ENCODE measurements at regions of chr10 and their contacts with region 1.

Region 1: GRCh38 chr10:103859161-103860086 is 4.0 kb upstream of the SH3PXD2A start:
- DNase-seq: peak; percentile 77
- H3K4me3 Mint-ChIP-seq: no peak overlapping the region
- H3K27ac Mint-ChIP-seq: no peak overlapping the region
- H3K4me1 Mint-ChIP-seq: peaks cover 18% of the 10 kb centered on the region
- H3K27me3 Mint-ChIP-seq: no peaks in the 10 kb centered on the region
- CTCF ChIP-seq: peak; percentile 71

Region 2: GRCh38 chr10:103712570-103713498 is 146.6 kb before region 1 on chr10:
- CTCF ChIA-PET with region 1: interaction called, 95 read pairs
- POLR2A ChIA-PET with region 1: interaction called, 7 read pairs
- intact Hi-C with region 1: loop called (anchors 1 kb)
- DNase-seq: peak; percentile 79
- H3K4me3 Mint-ChIP-seq: no peak overlapping the region
- H3K27ac Mint-ChIP-seq: peak overlapping the region; percentile 31
- H3K4me1 Mint-ChIP-seq: peaks cover 29% of the 10 kb centered on the region
- H3K27me3 Mint-ChIP-seq: no peaks in the 10 kb centered on the region
- CTCF ChIP-seq: peak; percentile 93

Region 3: GRCh38 chr10:103781329-103782061 is 77.9 kb before region 1 on chr10:
- CTCF ChIA-PET with region 1: interaction called, 9 read pairs
- POLR2A ChIA-PET with region 1: interaction called, 6 read pairs
- intact Hi-C with region 1: loop called (anchors 10 kb)
- DNase-seq: peak; percentile 66
- H3K4me3 Mint-ChIP-seq: peak overlapping the region; percentile 23
- H3K27ac Mint-ChIP-seq: peak overlapping the region; percentile 74
- H3K4me1 Mint-ChIP-seq: peaks cover 47% of the 10 kb centered on the region
- H3K27me3 Mint-ChIP-seq: no peaks in the 10 kb centered on the region
- CTCF ChIP-seq: peak; percentile 12

Region 4: DNA sequence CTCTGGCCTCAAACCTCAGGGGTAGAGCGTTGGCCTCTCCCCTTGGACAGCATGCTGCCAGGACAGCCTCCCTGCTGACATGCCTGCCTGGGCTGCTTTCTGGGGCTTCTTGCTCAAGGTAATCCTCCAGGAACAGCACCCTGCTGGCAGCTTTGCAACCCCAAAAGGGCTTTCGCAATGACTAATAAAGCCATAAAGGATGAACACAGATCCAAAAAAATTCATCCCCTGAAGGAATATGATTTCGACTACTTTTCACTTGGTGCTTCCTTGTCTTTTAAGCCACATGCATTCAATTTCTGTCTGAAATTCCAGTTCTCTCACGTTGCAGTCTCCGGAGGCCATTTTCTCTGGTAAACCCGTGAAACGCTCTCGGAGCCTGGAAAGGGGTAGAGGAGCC is 11.1 kb after region 1 on chr10:
- CTCF ChIA-PET with region 1: interaction called, 5 read pairs
- POLR2A ChIA-PET with region 1: interaction called, 85 read pairs
- intact Hi-C with region 1: no loop called
- DNase-seq: peak; percentile 97
- H3K4me3 Mint-ChIP-seq: peak overlapping the region; percentile 70
- H3K27ac Mint-ChIP-seq: peak overlapping the region; percentile 97
- H3K4me1 Mint-ChIP-seq: peaks cover 29% of the 10 kb centered on the region
- H3K27me3 Mint-ChIP-seq: no peaks in the 10 kb centered on the region
- CTCF ChIP-seq: no peak

Region 5: DNA sequence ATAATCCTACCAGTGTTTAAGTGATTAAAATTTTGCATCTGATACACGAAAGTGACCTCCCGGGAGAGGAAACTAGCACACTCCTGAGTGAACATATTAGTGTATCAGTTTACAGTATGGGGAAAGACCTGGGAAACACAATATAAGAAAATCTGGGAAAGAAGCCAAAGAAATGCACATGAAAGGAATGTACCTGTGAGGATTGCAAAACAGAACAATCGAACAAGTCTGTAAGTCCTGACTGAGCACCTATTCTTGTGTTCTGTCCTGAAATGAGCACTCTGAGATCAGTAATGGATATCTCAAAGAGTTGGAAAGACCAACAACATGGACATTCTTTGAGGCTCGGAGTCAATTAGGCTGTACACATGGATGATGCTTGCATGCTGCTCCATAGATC is 1336.4 kb after region 1 on chr10:
- CTCF ChIA-PET with region 1: no interaction called
- POLR2A ChIA-PET with region 1: no interaction called
- intact Hi-C with region 1: no loop called
- DNase-seq: peak; percentile 85
- H3K4me3 Mint-ChIP-seq: no peak overlapping the region
- H3K27ac Mint-ChIP-seq: no peak overlapping the region
- H3K4me1 Mint-ChIP-seq: peaks cover 5% of the 10 kb centered on the region
- H3K27me3 Mint-ChIP-seq: no peaks in the 10 kb centered on the region
- CTCF ChIP-seq: no peak